ENCODE measurements at regions of chr2 and their contacts with region 1.

Region 1: GRCh38 chr2:232668805-232669444 is 28.2 kb upstream of the GIGYF2 start:
- DNase-seq: peak; percentile 3
- ATAC-seq: peak; percentile 82
- H3K4me3 ChIP-seq: no peak overlapping the region
- H3K27ac ChIP-seq: no peak overlapping the region
- H3K4me1 ChIP-seq: no peaks in the 10 kb centered on the region
- H3K27me3 ChIP-seq: no peaks in the 10 kb centered on the region
- CTCF ChIP-seq: peak; percentile 45 to 53 (median 48); a peak in 5 of 6 replicates
- POLR2A ChIP-seq: no peak
- RAD21 ChIP-seq: peak; percentile 65

Region 2: GRCh38 chr2:232609607-232610006 is 59.3 kb before region 1 on chr2:
- CTCF ChIA-PET with region 1: interaction called, 3 read pairs
- POLR2A ChIA-PET with region 1: no interaction called
- RAD21 ChIA-PET with region 1: no interaction called
- intact Hi-C with region 1: loop called (anchors 2 kb)
- DNase-seq: no peak
- ATAC-seq: no peak
- H3K4me3 ChIP-seq: no peak overlapping the region
- H3K27ac ChIP-seq: no peak overlapping the region
- H3K4me1 ChIP-seq: peaks cover 0 to 8% of the 10 kb centered on the region in 2 experiments; a peak in 3 of 4 replicates
- H3K27me3 ChIP-seq: no peaks in the 10 kb centered on the region
- CTCF ChIP-seq: no peak
- POLR2A ChIP-seq: no peak
- RAD21 ChIP-seq: no peak

Measured in HCT116 (cell line).